Spleen (tissue), 13 donors: ENCODE measurements at regions of chr5 and their contacts with region 1.

Region 1: DNA sequence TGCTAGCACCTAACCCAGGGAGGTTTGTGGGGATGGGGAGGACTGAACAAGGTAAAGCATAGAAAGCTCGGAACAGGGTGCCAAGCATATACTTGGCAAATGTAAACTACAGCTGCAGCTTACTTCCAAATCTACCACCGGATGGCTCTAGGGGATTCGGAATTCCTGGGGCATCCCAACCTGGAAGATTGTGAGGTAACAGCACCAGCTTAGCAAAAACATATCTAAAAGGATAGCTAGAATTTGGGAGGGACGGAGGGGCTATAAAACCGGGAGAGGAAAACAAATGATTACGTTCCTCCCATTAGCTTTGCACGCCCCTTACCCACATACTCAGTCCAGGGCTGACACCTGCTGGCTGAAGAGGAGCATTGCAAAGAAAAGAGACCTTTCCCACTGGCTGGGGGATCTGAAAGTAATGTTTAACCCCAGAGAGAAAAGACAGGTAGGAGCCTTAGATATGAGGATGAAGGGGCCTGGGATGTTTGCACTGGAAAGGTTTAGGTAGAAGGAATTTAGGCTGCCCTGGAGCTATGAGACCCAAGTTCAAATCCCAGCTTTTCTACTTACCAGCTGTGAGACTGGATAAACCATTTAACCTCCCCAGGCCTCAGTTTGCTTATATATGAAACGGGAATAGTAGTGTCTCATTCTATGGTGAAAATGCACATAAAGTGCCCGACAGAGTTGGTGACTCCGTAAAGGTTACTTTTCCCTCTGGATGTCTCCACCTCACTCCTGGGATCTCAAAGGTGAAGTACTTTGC is 73.6 kb downstream of the FAM114A2 start:
- DNase-seq: no peak
- H3K4me3 ChIP-seq: no peak overlapping the region
- H3K27ac ChIP-seq: no peak overlapping the region
- H3K4me1 ChIP-seq: peaks cover 0 to 18% (median 0%) of the 10 kb centered on the region in 6 donors
- H3K27me3 ChIP-seq: peaks cover 0 to 8% (median 0%) of the 10 kb centered on the region in 7 donors
- CTCF ChIP-seq: peak; percentile 40 to 86 (median 82)
- POLR2A ChIP-seq: no peak

Region 2: DNA sequence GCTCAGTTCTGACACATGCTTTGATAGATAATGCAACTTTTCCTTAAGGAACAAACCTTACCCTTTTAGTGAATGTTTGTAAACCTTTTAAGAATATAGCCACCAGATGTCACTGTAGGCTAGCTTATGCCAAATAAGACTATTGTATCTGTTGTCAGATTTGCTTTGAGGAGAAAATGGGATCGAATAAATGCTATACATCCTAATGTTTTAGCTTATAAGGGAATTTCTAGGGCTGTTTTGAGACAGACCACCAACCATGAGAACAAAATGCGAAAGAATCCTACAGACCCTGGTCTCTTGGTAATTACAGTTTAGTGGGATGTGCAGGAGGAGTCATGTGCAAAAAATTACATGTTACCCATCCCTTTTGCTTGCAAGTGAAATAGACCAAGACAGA is 1432.3 kb before region 1 on chr5:
- intact Hi-C with region 1: loop called (anchors 5 kb)
- DNase-seq: no peak
- H3K4me3 ChIP-seq: no peak overlapping the region
- H3K27ac ChIP-seq: no peak overlapping the region
- H3K4me1 ChIP-seq: peaks cover 0 to 8% (median 2%) of the 10 kb centered on the region in 6 donors
- H3K27me3 ChIP-seq: no peaks in the 10 kb centered on the region
- CTCF ChIP-seq: peak in 9 of 11 experiments; percentile 3 to 53 (median 42)
- POLR2A ChIP-seq: no peak

Region 3: GRCh38 chr5:153496835-153497234 is 468.2 kb before region 1 on chr5:
- intact Hi-C with region 1: loop called (anchors 10 kb)
- DNase-seq: no peak
- H3K4me3 ChIP-seq: no peak overlapping the region
- H3K27ac ChIP-seq: no peak overlapping the region
- H3K4me1 ChIP-seq: no peaks in the 10 kb centered on the region
- H3K27me3 ChIP-seq: peaks cover 0 to 20% (median 0%) of the 10 kb centered on the region in 7 donors
- CTCF ChIP-seq: peak; percentile 11 to 67 (median 53)
- POLR2A ChIP-seq: no peak